ENCODE measurements at regions of chr12 and their contacts with region 1.

Region 1: GRCh38 chr12:102169922-102170621 is 27.6 kb downstream of the PMCH start:
- DNase-seq: peak; percentile 15
- H3K4me3 ChIP-seq: no peak overlapping the region
- H3K27ac ChIP-seq: no peak overlapping the region
- H3K4me1 ChIP-seq: no peaks in the 10 kb centered on the region
- H3K27me3 ChIP-seq: no peaks in the 10 kb centered on the region
- CTCF ChIP-seq: peak; percentile 78 to 84

Region 2: DNA sequence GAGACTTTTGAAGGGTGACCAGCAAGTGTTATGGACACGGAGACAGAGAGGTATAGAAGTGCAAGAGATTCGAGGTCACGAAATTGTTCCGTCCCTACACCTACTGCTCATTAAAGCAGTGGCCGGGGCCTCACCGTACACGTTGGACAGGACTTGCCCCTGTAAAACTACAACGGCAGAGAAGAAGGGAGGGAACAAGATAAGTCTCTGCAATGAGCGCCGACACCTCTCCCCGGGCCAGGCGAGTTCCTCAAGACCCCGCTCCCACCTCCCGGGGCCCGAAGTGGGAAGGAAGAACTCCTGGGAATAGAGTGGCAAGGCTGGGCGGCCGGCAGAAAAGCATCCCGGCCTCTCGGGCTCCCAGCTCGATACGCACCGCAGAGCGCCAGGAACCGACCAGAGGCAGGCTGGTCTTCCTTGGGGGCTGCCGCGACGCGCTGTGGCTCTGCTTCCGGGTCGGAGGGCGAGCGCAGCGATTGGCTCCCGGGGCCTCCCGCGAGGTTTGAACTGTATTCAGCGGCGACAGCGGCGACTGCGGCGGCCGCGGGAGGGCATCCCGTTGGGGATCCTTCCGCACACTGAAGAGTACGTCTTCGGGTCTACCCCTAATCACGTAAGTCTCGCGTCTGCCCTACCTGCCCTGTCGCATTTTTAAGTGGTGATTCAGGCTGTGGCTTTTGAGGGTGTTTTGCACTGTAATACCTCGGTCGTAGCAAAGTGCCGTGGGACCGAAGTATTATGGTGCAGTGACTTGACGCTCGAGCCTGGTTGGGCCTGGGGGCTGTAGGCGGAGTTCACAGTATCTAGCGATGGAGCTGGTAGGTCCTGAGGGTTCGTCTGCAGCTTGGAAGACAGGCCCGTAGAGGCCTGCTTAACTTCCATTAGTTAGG is 50.2 kb before region 1 on chr12 and contains the starts of genes NUP37 and PARPBP:
- CTCF ChIA-PET with region 1: no interaction called
- dilution Hi-C with region 1: loop called (anchors 5 kb)
- in situ Hi-C with region 1: no loop called
- intact Hi-C with region 1: no loop called
- DNase-seq: peak; percentile 93
- H3K4me3 ChIP-seq: peak within 1 kb of the TSS; percentile 76 to 91 (median 85)
- H3K27ac ChIP-seq: peak within 1 kb of the TSS; percentile 94
- H3K4me1 ChIP-seq: peaks cover 14% of the 10 kb centered on the region
- H3K27me3 ChIP-seq: no peaks in the 10 kb centered on the region
- CTCF ChIP-seq: peak in 1 of 2 donors; percentile 29
- total RNA-seq, gene NUP37: 18.8 to 47.4 TPM
- total RNA-seq, gene PARPBP: 3.8 to 10.2 TPM

Region 3: GRCh38 chr12:102702447-102703114 is 532.5 kb after region 1 on chr12:
- CTCF ChIA-PET with region 1: interaction called, 3 read pairs
- dilution Hi-C with region 1: no loop called
- in situ Hi-C with region 1: no loop called
- intact Hi-C with region 1: loop called (anchors 2 kb)
- DNase-seq: peak; percentile 20
- H3K4me3 ChIP-seq: no peak overlapping the region
- H3K27ac ChIP-seq: no peak overlapping the region
- H3K4me1 ChIP-seq: no peaks in the 10 kb centered on the region
- H3K27me3 ChIP-seq: no peaks in the 10 kb centered on the region
- CTCF ChIP-seq: peak; percentile 41 to 52

Region 4: GRCh38 chr12:102740141-102740955 is 570.3 kb after region 1 on chr12:
- CTCF ChIA-PET with region 1: no interaction called
- dilution Hi-C with region 1: no loop called
- in situ Hi-C with region 1: no loop called
- intact Hi-C with region 1: loop called (anchors 1 kb)
- DNase-seq: peak; percentile 1
- H3K4me3 ChIP-seq: no peak overlapping the region
- H3K27ac ChIP-seq: no peak overlapping the region
- H3K4me1 ChIP-seq: no peaks in the 10 kb centered on the region
- H3K27me3 ChIP-seq: no peaks in the 10 kb centered on the region
- CTCF ChIP-seq: peak in 1 of 2 donors; percentile 22